MCF 10A (cell line): ENCODE measurements at regions of chr9 and their contacts with region 1.

Region 1: GRCh38 chr9:111896353-111896958 is at the start of gene UGCG:
- DNase-seq: peak; percentile 88
- H3K4me3 Mint-ChIP-seq: no peak within 1 kb of the TSS
- H3K27ac Mint-ChIP-seq: no peak within 1 kb of the TSS
- H3K4me1 Mint-ChIP-seq: peaks cover 14% of the 10 kb centered on the region
- H3K27me3 Mint-ChIP-seq: no peaks in the 10 kb centered on the region
- CTCF ChIP-seq: no peak
- total RNA-seq, gene UGCG: 29.5 and 31.4 TPM in 2 replicates

Region 2: DNA sequence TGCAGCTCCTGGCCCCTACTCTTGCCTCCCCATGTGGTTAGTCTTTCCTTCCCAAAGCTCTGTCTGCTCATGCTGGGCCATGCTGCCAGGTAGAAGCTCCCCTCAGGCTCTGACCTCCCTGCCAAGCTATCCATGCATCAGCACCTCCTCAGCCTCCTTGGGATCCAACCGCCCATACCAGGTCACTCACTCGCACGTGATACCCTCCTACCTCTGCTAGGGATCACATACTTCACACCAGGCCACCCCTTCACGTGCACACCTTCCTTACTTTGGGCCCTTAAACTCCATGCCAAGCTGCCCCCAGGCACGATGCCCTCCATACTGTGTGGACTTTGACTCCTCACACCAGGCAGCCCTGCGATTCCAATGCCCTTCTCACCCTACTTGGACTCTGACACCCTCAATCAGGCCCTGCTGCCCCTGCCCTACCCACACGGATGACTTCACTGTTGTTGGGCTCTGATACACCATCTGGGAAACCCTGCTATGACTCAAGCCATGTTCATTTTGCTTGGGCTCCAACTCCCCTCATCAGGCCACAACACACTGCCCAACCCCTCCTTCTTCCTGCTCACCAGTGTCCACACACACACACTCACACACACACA is 337.4 kb before region 1 on chr9:
- CTCF ChIA-PET with region 1: no interaction called
- POLR2A ChIA-PET with region 1: no interaction called
- intact Hi-C with region 1: no loop called
- DNase-seq: peak; percentile 13
- H3K4me3 Mint-ChIP-seq: no peak overlapping the region
- H3K27ac Mint-ChIP-seq: no peak overlapping the region
- H3K4me1 Mint-ChIP-seq: peaks cover 5% of the 10 kb centered on the region
- H3K27me3 Mint-ChIP-seq: no peaks in the 10 kb centered on the region
- CTCF ChIP-seq: no peak

Region 3: DNA sequence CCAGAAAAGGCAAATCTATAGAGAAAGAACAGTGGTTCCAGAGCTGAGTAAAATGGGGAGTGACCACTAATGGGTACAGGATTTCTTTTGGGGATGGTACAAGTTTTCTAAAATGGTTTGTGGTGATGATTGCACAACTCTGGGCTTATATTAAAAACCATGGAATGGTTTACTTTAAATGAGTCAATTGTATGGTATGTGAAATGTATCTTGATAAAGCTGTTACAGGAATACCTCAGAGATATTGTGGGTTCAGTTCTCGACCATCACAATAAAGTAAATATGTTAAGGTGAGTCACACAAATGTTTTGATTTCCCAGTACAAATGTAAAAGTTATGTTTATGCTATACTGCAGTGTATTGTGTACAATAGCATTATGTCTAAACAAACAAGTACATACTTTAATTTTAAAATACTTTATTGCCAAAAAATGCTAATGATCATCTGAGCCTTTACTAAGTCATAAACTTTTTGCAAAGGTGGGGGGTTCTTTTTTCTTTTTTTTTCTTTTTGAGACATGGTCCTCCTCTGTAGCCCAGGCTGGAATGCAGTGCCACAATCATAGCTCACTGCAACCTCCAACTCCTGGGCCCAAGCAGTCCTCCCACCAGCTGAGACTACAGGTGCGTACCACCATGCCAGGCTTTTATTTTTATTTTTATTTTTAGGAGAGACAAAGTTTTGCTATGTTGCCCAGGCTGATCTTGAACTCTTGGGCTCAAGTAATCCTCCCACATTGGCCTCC is 167.7 kb before region 1 on chr9:
- CTCF ChIA-PET with region 1: no interaction called
- POLR2A ChIA-PET with region 1: interaction called, 10 read pairs
- intact Hi-C with region 1: no loop called
- DNase-seq: peak; percentile 93
- H3K4me3 Mint-ChIP-seq: peak overlapping the region; percentile 35
- H3K27ac Mint-ChIP-seq: peak overlapping the region; percentile 88
- H3K4me1 Mint-ChIP-seq: peaks cover 21% of the 10 kb centered on the region
- H3K27me3 Mint-ChIP-seq: no peaks in the 10 kb centered on the region
- CTCF ChIP-seq: no peak

Region 4: DNA sequence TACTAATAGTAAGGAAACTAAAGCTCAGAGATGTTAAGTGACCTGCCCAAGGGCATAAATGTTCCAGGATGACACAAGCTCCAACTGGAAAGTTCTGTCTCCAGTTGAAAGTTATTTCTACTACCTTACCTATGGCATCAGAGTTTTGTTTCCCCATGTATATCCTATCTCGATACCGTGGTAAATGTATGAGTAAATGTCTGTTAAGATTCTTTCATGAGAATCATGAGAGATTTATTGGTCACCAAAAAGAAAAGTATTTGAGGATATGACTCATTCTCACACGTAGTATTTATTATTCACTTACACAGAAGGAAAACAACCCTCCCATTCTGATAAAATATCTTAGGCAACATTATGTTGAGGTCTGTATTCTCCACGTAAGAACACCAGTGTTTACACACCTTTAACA is 90.6 kb before region 1 on chr9:
- CTCF ChIA-PET with region 1: no interaction called
- POLR2A ChIA-PET with region 1: interaction called, 18 read pairs
- intact Hi-C with region 1: no loop called
- DNase-seq: peak; percentile 79
- H3K4me3 Mint-ChIP-seq: peak overlapping the region; percentile 38
- H3K27ac Mint-ChIP-seq: peak overlapping the region; percentile 99
- H3K4me1 Mint-ChIP-seq: peaks cover 22% of the 10 kb centered on the region
- H3K27me3 Mint-ChIP-seq: no peaks in the 10 kb centered on the region
- CTCF ChIP-seq: no peak

Region 5: GRCh38 chr9:111866976-111867375 is 29.5 kb before region 1 on chr9:
- CTCF ChIA-PET with region 1: no interaction called
- POLR2A ChIA-PET with region 1: no interaction called
- intact Hi-C with region 1: no loop called
- DNase-seq: peak; percentile 73
- H3K4me3 Mint-ChIP-seq: no peak overlapping the region
- H3K27ac Mint-ChIP-seq: no peak overlapping the region
- H3K4me1 Mint-ChIP-seq: peaks cover 6% of the 10 kb centered on the region
- H3K27me3 Mint-ChIP-seq: no peaks in the 10 kb centered on the region
- CTCF ChIP-seq: no peak

Region 6: GRCh38 chr9:111925017-111925770 is 28.7 kb after region 1 on chr9:
- CTCF ChIA-PET with region 1: no interaction called
- POLR2A ChIA-PET with region 1: interaction called, 24 read pairs
- intact Hi-C with region 1: no loop called
- DNase-seq: no peak
- H3K4me3 Mint-ChIP-seq: no peak overlapping the region
- H3K27ac Mint-ChIP-seq: no peak overlapping the region
- H3K4me1 Mint-ChIP-seq: no peaks in the 10 kb centered on the region
- H3K27me3 Mint-ChIP-seq: no peaks in the 10 kb centered on the region
- CTCF ChIP-seq: no peak

Region 7: GRCh38 chr9:112028280-112029221 is 132.1 kb after region 1 on chr9:
- CTCF ChIA-PET with region 1: no interaction called
- POLR2A ChIA-PET with region 1: interaction called, 25 read pairs
- intact Hi-C with region 1: no loop called
- DNase-seq: no peak
- H3K4me3 Mint-ChIP-seq: no peak overlapping the region
- H3K27ac Mint-ChIP-seq: peak overlapping the region; percentile 96
- H3K4me1 Mint-ChIP-seq: peaks cover 30% of the 10 kb centered on the region
- H3K27me3 Mint-ChIP-seq: no peaks in the 10 kb centered on the region
- CTCF ChIP-seq: no peak

Region 8: GRCh38 chr9:112074250-112075008 is 178.0 kb after region 1 on chr9:
- CTCF ChIA-PET with region 1: interaction called, 7 read pairs
- POLR2A ChIA-PET with region 1: interaction called, 21 read pairs
- intact Hi-C with region 1: loop called (anchors 1 kb)
- DNase-seq: peak; percentile 87
- H3K4me3 Mint-ChIP-seq: no peak overlapping the region
- H3K27ac Mint-ChIP-seq: peak overlapping the region; percentile 83
- H3K4me1 Mint-ChIP-seq: peaks cover 15% of the 10 kb centered on the region
- H3K27me3 Mint-ChIP-seq: no peaks in the 10 kb centered on the region
- CTCF ChIP-seq: peak; percentile 90